K562 (cell line): ENCODE measurements at regions of chr5 and their contacts with region 1.

Region 1: DNA sequence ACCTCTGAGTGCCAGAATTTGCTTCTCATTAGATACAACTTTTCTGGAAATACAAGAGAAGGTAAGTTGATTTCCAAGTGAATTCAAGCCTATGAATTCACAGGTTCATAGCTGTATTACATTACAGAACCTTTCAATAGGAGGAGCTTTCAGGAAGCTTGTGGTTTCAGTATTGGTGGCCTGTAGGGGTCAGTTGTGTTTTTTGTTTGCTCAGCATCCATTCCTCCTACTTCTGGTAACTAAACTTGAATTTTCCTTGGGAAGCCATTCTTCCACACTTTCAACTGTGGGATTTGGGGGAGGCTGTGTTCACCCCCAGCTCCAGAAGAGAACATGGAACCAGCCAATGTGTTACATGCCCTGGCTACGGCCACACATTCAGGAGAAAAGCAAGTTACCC is 5.6 kb upstream of the CYSTM1 start:
- DNase-seq: peak in 2 of 4 experiments; percentile 49 to 55
- ATAC-seq: peak; percentile 78
- H3K4me3 ChIP-seq: no peak overlapping the region
- H3K27ac ChIP-seq: no peak overlapping the region
- H3K4me1 ChIP-seq: peaks cover 4 to 39% of the 10 kb centered on the region in 2 experiments; a peak in 4 of 5 replicates
- H3K27me3 ChIP-seq: no peaks in the 10 kb centered on the region; a peak in 1 of 5 replicates
- CTCF ChIP-seq: peak; percentile 33 to 69 (median 69); a peak in 5 of 6 replicates
- EP300 ChIP-seq: no peak
- POLR2A ChIP-seq: no peak
- RAD21 ChIP-seq: peak; percentile 42 to 71

Region 2: GRCh38 chr5:139783436-139783965 is 385.9 kb before region 1 on chr5:
- CTCF ChIA-PET with region 1: no interaction called
- POLR2A ChIA-PET with region 1: no interaction called
- in situ Hi-C with region 1: no loop called
- intact Hi-C with region 1: no loop called
- DNase-seq: no peak
- ATAC-seq: no peak
- H3K4me3 ChIP-seq: no peak overlapping the region
- H3K27ac ChIP-seq: no peak overlapping the region
- H3K4me1 ChIP-seq: peaks cover 0 to 12% of the 10 kb centered on the region in 2 experiments; a peak in 2 of 5 replicates
- H3K27me3 ChIP-seq: peaks cover 19 to 35% of the 10 kb centered on the region in 2 experiments
- CTCF ChIP-seq: no peak
- EP300 ChIP-seq: no peak
- POLR2A ChIP-seq: no peak
- RAD21 ChIP-seq: no peak

Region 3: DNA sequence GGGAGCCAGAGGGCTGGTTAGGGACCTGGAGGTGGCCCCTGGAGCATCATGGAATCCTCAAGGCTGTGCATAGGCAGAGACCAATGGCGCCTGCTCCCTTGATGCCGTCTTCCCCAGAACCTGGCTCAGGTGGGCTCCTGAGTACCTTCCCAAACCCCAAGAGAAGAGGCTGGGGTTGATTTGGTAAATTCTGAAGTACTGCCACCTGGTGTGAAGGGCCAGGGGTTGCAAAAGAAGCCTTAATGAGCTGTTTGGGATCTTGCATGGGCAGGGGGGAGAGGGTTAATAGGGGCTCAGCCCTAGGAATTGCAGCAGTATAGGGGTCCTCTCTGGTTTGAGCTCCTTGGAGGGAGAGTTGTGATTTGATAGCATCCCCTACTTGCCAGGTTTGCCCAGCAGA is 57.6 kb after region 1 on chr5:
- CTCF ChIA-PET with region 1: no interaction called
- POLR2A ChIA-PET with region 1: no interaction called
- in situ Hi-C with region 1: no loop called
- intact Hi-C with region 1: loop called (anchors 1 kb)
- DNase-seq: no peak
- ATAC-seq: peak; percentile 35; the same call in 2 of the 3 replicates
- H3K4me3 ChIP-seq: no peak overlapping the region
- H3K27ac ChIP-seq: no peak overlapping the region
- H3K4me1 ChIP-seq: peaks cover 6 to 25% of the 10 kb centered on the region in 2 experiments
- H3K27me3 ChIP-seq: no peaks in the 10 kb centered on the region
- CTCF ChIP-seq: peak; percentile 29 to 41 (median 30); a peak in 5 of 6 replicates
- EP300 ChIP-seq: no peak
- POLR2A ChIP-seq: no peak
- RAD21 ChIP-seq: peak in 1 of 2 experiments; percentile 42; a peak in 2 of 4 replicates

Region 4: GRCh38 chr5:140357726-140358093 is 188.3 kb after region 1 on chr5:
- CTCF ChIA-PET with region 1: no interaction called
- POLR2A ChIA-PET with region 1: no interaction called
- in situ Hi-C with region 1: loop called (anchors 10 kb)
- intact Hi-C with region 1: loop called (anchors 5 kb)
- DNase-seq: peak; percentile 81 to 85 (median 82)
- ATAC-seq: peak; percentile 97
- H3K4me3 ChIP-seq: peak overlapping the region; percentile 20
- H3K27ac ChIP-seq: no peak overlapping the region
- H3K4me1 ChIP-seq: peaks cover 0 to 12% of the 10 kb centered on the region in 2 experiments; a peak in 2 of 5 replicates
- H3K27me3 ChIP-seq: no peaks in the 10 kb centered on the region
- CTCF ChIP-seq: peak; percentile 94
- EP300 ChIP-seq: no peak
- POLR2A ChIP-seq: no peak
- RAD21 ChIP-seq: peak; percentile 79 to 88